Mammary epithelial cell (primary cell): ENCODE measurements at regions of chr18 and their contacts with region 1.

Region 1: GRCh38 chr18:23719634-23720201 is 30.5 kb downstream of the LAMA3 start:
- DNase-seq: peak; percentile 97
- H3K4me3 ChIP-seq: no peak overlapping the region
- H3K27ac ChIP-seq: peak overlapping the region; percentile 85
- H3K4me1 ChIP-seq: peaks cover 44% of the 10 kb centered on the region
- H3K27me3 ChIP-seq: no peaks in the 10 kb centered on the region
- CTCF ChIP-seq: no peak

Region 2: GRCh38 chr18:23291456-23292205 is 428.1 kb before region 1 on chr18:
- CTCF ChIA-PET with region 1: no interaction called
- dilution Hi-C with region 1: no loop called
- in situ Hi-C with region 1: no loop called
- intact Hi-C with region 1: no loop called
- DNase-seq: peak; percentile 70
- H3K4me3 ChIP-seq: no peak overlapping the region
- H3K27ac ChIP-seq: no peak overlapping the region
- H3K4me1 ChIP-seq: peaks cover 24% of the 10 kb centered on the region
- H3K27me3 ChIP-seq: no peaks in the 10 kb centered on the region
- CTCF ChIP-seq: no peak

Region 3: GRCh38 chr18:23798249-23798648 is 78.5 kb after region 1 on chr18:
- CTCF ChIA-PET with region 1: no interaction called
- dilution Hi-C with region 1: no loop called
- in situ Hi-C with region 1: loop called in 1 of 2 experiments (anchors 10 kb)
- intact Hi-C with region 1: loop called (anchors 5 kb)
- DNase-seq: no peak
- H3K4me3 ChIP-seq: no peak overlapping the region
- H3K27ac ChIP-seq: no peak overlapping the region
- H3K4me1 ChIP-seq: no peaks in the 10 kb centered on the region
- H3K27me3 ChIP-seq: no peaks in the 10 kb centered on the region
- CTCF ChIP-seq: no peak

Region 4: DNA sequence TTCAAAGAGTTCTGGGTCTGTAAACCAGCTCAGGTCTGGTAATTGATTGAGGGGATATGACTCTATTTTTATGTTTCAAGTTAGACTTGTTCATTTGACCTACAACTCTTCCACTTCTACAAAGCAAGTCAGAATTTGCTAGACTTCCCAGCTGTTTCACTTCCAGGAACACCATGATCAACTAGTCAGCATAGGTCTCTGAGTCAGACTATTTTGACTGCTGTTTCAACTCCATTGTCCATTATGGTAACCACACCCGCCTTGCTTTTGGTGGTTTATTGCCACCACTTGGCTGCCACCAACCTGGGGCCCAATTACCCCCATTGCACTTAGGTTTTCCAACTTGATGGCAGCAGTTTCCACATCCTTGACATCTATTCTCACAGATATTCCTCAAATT is 86.2 kb after region 1 on chr18:
- CTCF ChIA-PET with region 1: no interaction called
- dilution Hi-C with region 1: no loop called
- in situ Hi-C with region 1: loop called in 1 of 2 experiments (anchors 10 kb)
- intact Hi-C with region 1: loop called (anchors 5 kb)
- DNase-seq: peak; percentile 81
- H3K4me3 ChIP-seq: no peak overlapping the region
- H3K27ac ChIP-seq: no peak overlapping the region
- H3K4me1 ChIP-seq: peaks cover 10% of the 10 kb centered on the region
- H3K27me3 ChIP-seq: no peaks in the 10 kb centered on the region
- CTCF ChIP-seq: no peak

Region 5: DNA sequence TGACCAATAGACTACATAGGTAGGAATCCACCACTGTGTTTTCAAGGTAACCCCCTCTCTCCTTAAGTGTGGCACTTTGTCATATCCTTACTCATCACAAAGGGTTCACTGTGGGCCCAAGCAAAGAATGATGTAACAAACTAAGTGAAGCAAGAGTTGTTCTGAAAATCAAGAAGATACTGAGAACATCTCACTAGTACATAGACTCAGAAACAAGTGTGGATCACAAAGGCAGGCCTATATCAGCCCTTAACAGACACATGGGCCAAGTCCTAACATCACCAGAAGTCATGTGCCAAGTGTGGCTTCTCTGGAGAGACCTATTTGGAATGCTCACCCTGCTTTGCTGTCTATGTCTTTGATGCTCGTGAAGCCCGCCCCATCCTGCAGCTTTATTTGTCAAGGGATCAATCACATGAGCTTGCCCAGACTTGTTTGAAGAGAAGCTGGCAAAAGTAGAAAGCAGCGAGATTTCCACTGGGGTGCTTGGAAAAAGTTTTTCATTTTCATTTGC is 163.6 kb after region 1 on chr18:
- CTCF ChIA-PET with region 1: no interaction called
- dilution Hi-C with region 1: no loop called
- in situ Hi-C with region 1: no loop called
- intact Hi-C with region 1: loop called (anchors 5 kb)
- DNase-seq: peak; percentile 85
- H3K4me3 ChIP-seq: no peak overlapping the region
- H3K27ac ChIP-seq: peak overlapping the region; percentile 73
- H3K4me1 ChIP-seq: peaks cover 77% of the 10 kb centered on the region
- H3K27me3 ChIP-seq: no peaks in the 10 kb centered on the region
- CTCF ChIP-seq: no peak